PC-9 (cell line): ENCODE measurements at regions of chr2 and their contacts with region 1.

Region 1: GRCh38 chr2:178112202-178113152 is at the start of gene RBM45:
- DNase-seq: peak; percentile 92 to 96
- H3K4me3 ChIP-seq: peak within 1 kb of the TSS; percentile 77
- H3K27ac ChIP-seq: no peak within 1 kb of the TSS; the same call in 1 of the 2 replicates
- H3K4me1 ChIP-seq: peaks cover 15% of the 10 kb centered on the region
- H3K27me3 ChIP-seq: no peaks in the 10 kb centered on the region
- CTCF ChIP-seq: peak; percentile 100
- total RNA-seq, gene RBM45: 8.7 and 12.6 TPM in 2 replicates

Region 2: GRCh38 chr2:177983183-177983788 is 129.2 kb before region 1 on chr2:
- CTCF ChIA-PET with region 1: interaction called, 3 read pairs
- POLR2A ChIA-PET with region 1: no interaction called
- intact Hi-C with region 1: loop called (anchors 1 kb)
- DNase-seq: peak; percentile 43 to 56
- H3K4me3 ChIP-seq: no peak overlapping the region
- H3K27ac ChIP-seq: no peak overlapping the region
- H3K4me1 ChIP-seq: no peaks in the 10 kb centered on the region
- H3K27me3 ChIP-seq: no peaks in the 10 kb centered on the region
- CTCF ChIP-seq: peak; percentile 96

Region 3: GRCh38 chr2:178043266-178043665 is 69.2 kb before region 1 on chr2:
- CTCF ChIA-PET with region 1: no interaction called
- POLR2A ChIA-PET with region 1: no interaction called
- intact Hi-C with region 1: no loop called
- DNase-seq: no peak
- H3K4me3 ChIP-seq: no peak overlapping the region
- H3K27ac ChIP-seq: no peak overlapping the region
- H3K4me1 ChIP-seq: no peaks in the 10 kb centered on the region
- H3K27me3 ChIP-seq: no peaks in the 10 kb centered on the region
- CTCF ChIP-seq: no peak

Region 4: GRCh38 chr2:178066324-178066723 is 46.2 kb before region 1 on chr2:
- CTCF ChIA-PET with region 1: no interaction called
- POLR2A ChIA-PET with region 1: no interaction called
- intact Hi-C with region 1: no loop called
- DNase-seq: no peak
- H3K4me3 ChIP-seq: no peak overlapping the region
- H3K27ac ChIP-seq: no peak overlapping the region
- H3K4me1 ChIP-seq: no peaks in the 10 kb centered on the region
- H3K27me3 ChIP-seq: no peaks in the 10 kb centered on the region
- CTCF ChIP-seq: no peak

Region 5: DNA sequence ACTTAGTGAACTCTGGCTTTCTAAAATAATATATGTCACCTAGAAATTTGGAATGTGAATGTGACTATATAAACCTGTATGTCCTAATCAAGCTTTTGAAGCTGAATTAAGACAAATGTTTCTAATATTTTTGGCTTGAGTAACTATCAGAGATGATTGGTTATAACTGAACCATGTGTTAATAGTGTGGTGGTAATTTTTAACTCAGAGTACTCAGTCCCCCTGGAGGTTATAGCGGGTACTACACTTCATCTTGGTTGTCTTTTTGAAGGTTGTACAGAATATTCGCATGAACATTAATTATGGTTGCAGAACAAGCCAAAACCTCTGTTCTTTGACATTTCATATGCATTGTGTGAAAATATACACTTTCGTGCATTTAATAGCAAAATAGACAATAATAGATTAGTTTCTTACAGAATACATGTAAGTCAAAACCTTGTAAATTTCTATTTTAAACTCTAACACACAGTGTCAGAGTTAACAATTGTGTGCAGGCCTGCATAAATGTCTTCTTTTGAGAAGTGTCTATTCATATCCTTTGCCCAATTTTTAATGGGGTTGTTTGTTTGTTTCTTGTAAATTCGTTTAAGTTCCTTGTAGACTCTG is 167.9 kb after region 1 on chr2:
- CTCF ChIA-PET with region 1: no interaction called
- POLR2A ChIA-PET with region 1: no interaction called
- intact Hi-C with region 1: loop called (anchors 5 kb)
- DNase-seq: peak; percentile 19 to 66
- H3K4me3 ChIP-seq: no peak overlapping the region
- H3K27ac ChIP-seq: no peak overlapping the region
- H3K4me1 ChIP-seq: 0 out of 2 replicates have a peak, but pooled peaks cover 7% of the 10 kb centered on the region
- H3K27me3 ChIP-seq: no peaks in the 10 kb centered on the region
- CTCF ChIP-seq: peak; percentile 95

Region 6: DNA sequence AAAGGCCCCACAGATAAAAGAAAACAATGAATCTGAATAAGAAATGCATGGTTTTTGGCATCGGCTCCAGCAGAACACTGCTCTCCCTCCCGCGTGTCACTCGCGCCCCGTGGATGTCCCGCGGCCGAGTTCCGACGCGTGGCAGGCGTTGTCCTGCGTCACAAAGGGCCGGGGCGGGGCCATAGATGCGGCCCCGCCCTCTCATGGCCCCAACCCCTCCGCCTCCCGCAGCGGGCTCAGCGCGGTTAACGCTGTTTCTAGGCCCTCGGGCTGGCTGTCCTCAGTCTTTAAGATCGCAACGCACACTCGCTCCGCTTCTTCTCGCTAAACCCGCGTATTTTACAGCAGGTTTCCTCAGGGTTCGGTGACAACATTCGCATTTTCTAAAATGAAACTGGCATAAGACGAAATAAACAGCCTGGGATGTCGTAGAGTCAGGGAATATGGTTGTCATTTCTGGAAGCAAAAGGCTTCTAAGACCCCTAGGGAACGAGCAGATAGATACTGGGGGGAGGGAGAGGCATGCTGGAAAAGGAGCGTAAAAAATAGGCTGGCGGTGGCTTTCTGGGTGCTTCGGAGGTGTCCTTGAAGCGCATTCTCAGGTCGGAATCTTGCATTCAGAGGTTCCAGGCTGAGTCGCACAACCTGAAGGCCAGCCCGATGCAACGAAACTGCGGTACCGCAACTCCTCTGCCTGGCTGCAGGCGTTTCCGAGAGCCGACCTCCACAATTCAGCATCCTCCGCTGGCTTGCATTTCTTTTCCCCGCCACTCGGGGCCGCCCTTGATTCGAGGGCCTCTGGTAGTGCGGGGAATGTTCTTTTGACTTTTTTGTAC is 366.2 kb after region 1 on chr2 and contains the start of gene FKBP7:
- CTCF ChIA-PET with region 1: no interaction called
- POLR2A ChIA-PET with region 1: no interaction called
- intact Hi-C with region 1: loop called (anchors 1 kb)
- DNase-seq: peak; percentile 71 to 85
- H3K4me3 ChIP-seq: peak within 1 kb of the TSS; percentile 77
- H3K27ac ChIP-seq: peak within 1 kb of the TSS; percentile 56
- H3K4me1 ChIP-seq: peaks cover 45% of the 10 kb centered on the region
- H3K27me3 ChIP-seq: no peaks in the 10 kb centered on the region
- CTCF ChIP-seq: peak; percentile 87
- total RNA-seq, gene FKBP7: 3.8 and 6.1 TPM in 2 replicates

Region 7: DNA sequence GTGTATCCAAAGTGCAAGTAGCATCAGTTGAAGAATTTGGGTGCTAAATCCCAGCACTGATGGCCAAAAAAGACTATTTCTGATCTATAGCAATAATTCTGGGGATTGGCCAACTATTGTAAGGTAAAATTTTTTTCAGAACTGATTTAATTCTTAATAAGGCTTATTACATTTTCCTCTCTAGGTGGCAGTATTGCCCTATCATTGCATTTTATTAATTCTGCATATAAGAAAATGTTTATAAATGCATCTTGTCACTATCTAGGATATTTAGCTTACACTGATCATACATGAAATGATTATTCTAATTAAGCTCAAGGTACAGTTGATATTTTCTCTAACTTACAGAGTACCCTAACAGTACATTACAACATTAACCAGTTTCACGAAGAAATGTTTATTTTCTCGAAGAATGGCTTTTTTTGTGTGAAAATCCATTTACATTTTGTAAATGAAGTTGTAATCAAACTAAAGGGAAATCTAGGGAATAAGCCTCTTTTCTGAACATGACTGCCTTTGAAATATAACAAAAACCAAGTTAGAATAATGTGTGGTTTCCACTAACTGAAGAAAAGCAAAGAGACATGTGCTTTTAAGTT is 683.7 kb after region 1 on chr2:
- CTCF ChIA-PET with region 1: no interaction called
- POLR2A ChIA-PET with region 1: no interaction called
- intact Hi-C with region 1: loop called (anchors 5 kb)
- DNase-seq: peak in 1 of 2 experiments; percentile 65
- H3K4me3 ChIP-seq: no peak overlapping the region
- H3K27ac ChIP-seq: no peak overlapping the region
- H3K4me1 ChIP-seq: no peaks in the 10 kb centered on the region
- H3K27me3 ChIP-seq: no peaks in the 10 kb centered on the region
- CTCF ChIP-seq: peak; percentile 97